ENCODE measurements at regions of chr1 and their contacts with region 1.

Region 1: GRCh38 chr1:213244664-213245091 is 193.6 kb downstream of the RPS6KC1 start:
- DNase-seq: peak; percentile 14
- H3K4me3 ChIP-seq: no peak overlapping the region
- H3K27ac ChIP-seq: no peak overlapping the region
- H3K4me1 ChIP-seq: no peaks in the 10 kb centered on the region
- H3K27me3 ChIP-seq: no peaks in the 10 kb centered on the region
- CTCF ChIP-seq: peak; percentile 65 to 67

Region 2: DNA sequence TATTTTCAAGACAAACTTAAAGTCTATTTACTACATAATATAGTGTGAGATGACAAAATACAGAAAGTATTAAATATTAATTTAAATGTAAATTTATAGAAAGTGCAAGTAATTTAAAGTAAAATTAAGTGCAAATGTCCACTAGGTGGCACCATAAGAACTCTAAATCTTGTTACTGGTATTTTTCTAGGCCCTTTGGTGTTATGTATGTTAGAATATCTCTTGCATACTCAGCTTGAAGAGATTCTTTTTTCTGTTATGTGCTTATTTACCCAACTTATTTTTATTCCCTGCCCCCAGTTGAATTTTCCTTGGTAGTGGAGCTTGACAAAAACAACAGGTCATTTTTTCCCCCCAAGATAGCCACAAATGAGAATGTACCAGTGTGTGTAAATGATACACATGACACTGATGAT is 122.2 kb before region 1 on chr1:
- CTCF ChIA-PET with region 1: no interaction called
- dilution Hi-C with region 1: no loop called
- in situ Hi-C with region 1: no loop called
- intact Hi-C with region 1: loop called (anchors 5 kb)
- DNase-seq: peak; percentile 24
- H3K4me3 ChIP-seq: no peak overlapping the region
- H3K27ac ChIP-seq: no peak overlapping the region
- H3K4me1 ChIP-seq: peaks cover 21% of the 10 kb centered on the region
- H3K27me3 ChIP-seq: no peaks in the 10 kb centered on the region
- CTCF ChIP-seq: peak; percentile 32 to 43